ENCODE measurements at regions of chr1 and their contacts with region 1.

Region 1: GRCh38 chr1:7680207-7680954 is 90.7 kb upstream of the VAMP3 start:
- DNase-seq: no peak
- H3K4me3 ChIP-seq: peak overlapping the region; percentile 71
- H3K27me3 ChIP-seq: peaks cover 3% of the 10 kb centered on the region; the same call in 1 of the 2 replicates
- CTCF ChIP-seq: no peak

Region 2: GRCh38 chr1:7704214-7705047 is 24.1 kb after region 1 on chr1:
- CTCF ChIA-PET with region 1: no interaction called
- POLR2A ChIA-PET with region 1: interaction called, 18 read pairs
- DNase-seq: peak; percentile 11
- H3K4me3 ChIP-seq: peak overlapping the region; percentile 23
- H3K27me3 ChIP-seq: peaks cover 26% of the 10 kb centered on the region
- CTCF ChIP-seq: no peak

Measured in BJ (cell line).